Aorta (tissue), 5 donors: ENCODE measurements at regions of chr16 and their contacts with region 1.

Region 1: GRCh38 chr16:86563489-86564345 is 2.9 kb upstream of the FOXC2 start:
- DNase-seq: peak; percentile 93 to 95
- ATAC-seq: peak; percentile 92
- H3K4me3 ChIP-seq: peak overlapping the region; percentile 3 to 41
- H3K27ac ChIP-seq: peak overlapping the region; percentile 91 to 94
- H3K4me1 ChIP-seq: no peaks in the 10 kb centered on the region
- H3K27me3 ChIP-seq: no peaks in the 10 kb centered on the region

Region 2: GRCh38 chr16:86834451-86835035 is 270.8 kb after region 1 on chr16:
- intact Hi-C with region 1: loop called in 1 of 2 experiments (anchors 5 kb)
- DNase-seq: peak; percentile 47 to 65
- ATAC-seq: no peak
- H3K4me3 ChIP-seq: no peak overlapping the region
- H3K27ac ChIP-seq: no peak overlapping the region
- H3K4me1 ChIP-seq: no peaks in the 10 kb centered on the region
- H3K27me3 ChIP-seq: no peaks in the 10 kb centered on the region

Region 3: GRCh38 chr16:87062569-87063442 is 499.1 kb after region 1 on chr16:
- intact Hi-C with region 1: loop called (anchors 1 to 2 kb)
- DNase-seq: peak; percentile 86 to 92
- ATAC-seq: peak; percentile 91
- H3K4me3 ChIP-seq: no peak overlapping the region
- H3K27ac ChIP-seq: peak overlapping the region in 1 of 2 donors; percentile 45
- H3K4me1 ChIP-seq: no peaks in the 10 kb centered on the region
- H3K27me3 ChIP-seq: no peaks in the 10 kb centered on the region

Region 4: DNA sequence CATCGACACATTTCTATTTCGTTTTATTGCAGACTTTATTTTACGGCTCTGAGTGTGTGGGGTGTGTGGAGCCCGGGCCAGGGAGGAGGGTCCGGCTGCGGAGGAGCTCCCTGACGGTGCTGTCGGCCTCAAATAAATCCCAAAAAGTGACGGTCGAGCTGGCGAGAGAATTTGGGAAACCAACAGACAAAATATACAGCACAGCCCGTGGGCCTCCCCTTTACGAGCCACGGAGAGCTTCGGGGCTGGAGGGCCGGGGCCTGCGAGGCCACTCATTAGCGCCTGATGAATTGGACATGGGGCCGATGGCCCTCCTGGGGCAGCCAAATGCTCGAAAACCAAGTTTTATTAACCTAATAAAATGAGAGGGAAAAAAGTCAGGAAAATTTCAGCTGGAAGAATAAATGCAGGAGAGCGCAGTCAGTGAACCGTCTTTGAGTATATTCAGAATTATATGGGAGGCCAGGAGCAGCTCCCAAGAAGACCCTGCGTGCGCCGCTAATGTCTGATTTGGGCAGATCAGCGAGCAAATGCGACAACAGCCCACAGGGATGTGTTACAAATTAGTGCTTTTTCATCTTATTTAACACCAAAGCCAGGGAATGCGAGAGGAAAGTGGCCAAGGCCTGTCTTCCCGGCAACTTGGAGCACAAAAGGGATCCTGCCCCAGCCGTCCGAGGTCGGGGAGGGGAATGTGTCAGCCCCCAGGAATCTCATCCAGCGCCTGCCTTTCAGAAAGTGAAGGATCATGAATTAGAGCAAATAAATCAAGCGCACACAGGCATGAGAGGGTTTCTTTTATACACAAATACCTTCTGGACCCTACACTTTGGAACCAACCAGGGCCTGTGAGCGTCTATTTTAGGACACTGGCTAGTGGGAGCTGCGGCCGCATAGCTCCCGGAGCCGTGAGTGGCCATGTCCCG is 504.4 kb after region 1 on chr16:
- intact Hi-C with region 1: loop called in 1 of 2 experiments (anchors 2 kb)
- DNase-seq: no peak
- ATAC-seq: peak; percentile 57
- H3K4me3 ChIP-seq: no peak overlapping the region
- H3K27ac ChIP-seq: peak overlapping the region; percentile 18 to 22
- H3K4me1 ChIP-seq: no peaks in the 10 kb centered on the region
- H3K27me3 ChIP-seq: no peaks in the 10 kb centered on the region

Region 5: GRCh38 chr16:87203060-87203656 is 639.4 kb after region 1 on chr16:
- intact Hi-C with region 1: loop called (anchors 10 kb)
- DNase-seq: peak; percentile 82 to 89
- ATAC-seq: no peak
- H3K4me3 ChIP-seq: no peak overlapping the region
- H3K27ac ChIP-seq: peak overlapping the region in 1 of 2 donors; percentile 12
- H3K4me1 ChIP-seq: peaks cover 0 to 4% of the 10 kb centered on the region in 2 donors
- H3K27me3 ChIP-seq: no peaks in the 10 kb centered on the region

Region 6: DNA sequence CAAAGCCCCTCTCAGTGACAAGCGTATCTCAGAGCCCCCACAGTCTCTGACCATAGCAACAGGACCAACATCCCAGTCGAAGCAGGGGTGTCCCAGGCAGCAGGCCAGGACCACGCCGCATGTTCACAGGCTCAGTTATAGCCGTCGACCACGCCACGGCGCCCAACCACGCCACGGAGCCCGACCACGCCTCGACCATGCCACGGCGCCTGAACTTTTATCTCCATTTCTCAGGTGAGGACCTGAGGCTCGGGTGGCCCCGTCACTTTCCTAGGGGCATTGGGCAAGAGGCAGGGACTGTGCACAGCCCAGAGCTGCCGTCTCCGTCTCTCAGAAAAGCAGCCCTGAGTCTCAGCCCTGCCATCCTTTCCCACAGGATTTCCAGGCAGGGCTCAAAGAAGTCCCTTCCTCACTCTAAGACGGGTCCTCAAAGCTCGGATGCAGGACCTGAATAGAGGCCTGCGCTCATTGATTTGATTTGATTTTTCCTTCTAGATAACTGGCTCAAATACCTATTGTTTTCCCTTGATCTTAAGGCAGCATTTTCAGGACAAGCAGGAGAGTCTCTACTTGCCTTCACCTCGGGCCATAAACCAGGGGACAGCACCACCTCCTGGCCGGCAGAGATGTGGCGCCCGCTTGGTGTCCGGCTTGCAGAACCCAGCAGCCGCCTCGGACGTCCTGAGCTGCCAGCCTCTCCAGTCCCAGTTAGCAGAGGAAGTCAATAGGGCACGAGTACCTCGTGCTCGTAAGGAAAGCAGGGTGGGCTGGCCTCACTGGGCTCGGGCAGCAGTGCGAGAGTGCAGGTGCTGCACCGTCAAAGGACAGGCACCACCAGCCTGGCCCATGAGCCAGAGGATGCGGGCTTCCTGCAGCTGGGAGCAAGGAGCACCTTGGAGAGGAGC is 714.7 kb after region 1 on chr16:
- intact Hi-C with region 1: loop called (anchors 1 to 2 kb)
- DNase-seq: peak; percentile 88 to 94
- ATAC-seq: peak; percentile 91
- H3K4me3 ChIP-seq: no peak overlapping the region
- H3K27ac ChIP-seq: no peak overlapping the region
- H3K4me1 ChIP-seq: no peaks in the 10 kb centered on the region
- H3K27me3 ChIP-seq: no peaks in the 10 kb centered on the region

Region 7: DNA sequence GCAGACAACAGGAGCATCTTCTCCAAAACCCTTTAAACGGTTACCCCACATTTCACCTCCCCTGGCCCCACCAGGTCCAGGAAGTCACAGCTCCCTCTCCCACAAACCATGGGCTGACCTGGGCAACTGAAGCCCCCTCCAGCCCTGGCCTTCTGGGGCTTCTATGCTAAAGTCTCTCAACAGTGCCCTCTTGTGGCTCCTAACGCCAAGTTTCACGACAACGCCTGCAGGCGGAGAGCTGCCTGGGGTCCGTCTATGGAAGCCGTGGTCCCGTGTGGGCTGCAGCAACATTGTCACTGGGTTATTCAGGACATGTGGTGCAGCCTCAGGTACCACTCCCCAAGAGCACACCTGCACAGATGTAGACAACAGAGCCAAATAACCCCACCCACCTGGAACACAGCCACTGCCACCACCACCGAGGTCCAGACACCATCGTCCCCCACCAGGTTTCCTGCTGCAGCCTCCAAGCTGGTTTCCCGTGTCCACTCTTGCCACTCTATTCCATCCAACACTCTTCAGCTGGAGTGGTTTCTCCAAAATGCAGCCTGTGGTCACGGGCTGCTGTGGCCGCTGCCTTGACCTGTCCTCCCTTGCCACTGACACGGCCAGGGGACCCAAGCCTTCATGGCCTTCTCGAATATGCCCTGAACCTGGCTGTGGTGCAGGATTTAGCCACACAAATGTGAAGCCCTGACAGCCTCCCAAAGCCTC is 734.4 kb after region 1 on chr16:
- intact Hi-C with region 1: loop called (anchors 2 to 5 kb)
- DNase-seq: no peak
- ATAC-seq: peak; percentile 57
- H3K4me3 ChIP-seq: no peak overlapping the region
- H3K27ac ChIP-seq: no peak overlapping the region
- H3K4me1 ChIP-seq: no peaks in the 10 kb centered on the region
- H3K27me3 ChIP-seq: no peaks in the 10 kb centered on the region